Breast epithelium (tissue), 4 donors: ENCODE measurements at regions of chr7 and their contacts with region 1.

Region 1: GRCh38 chr7:4445777-4446176 is 236.3 kb upstream of the FOXK1 start:
- DNase-seq: no peak
- H3K4me3 ChIP-seq: no peak overlapping the region
- H3K27ac ChIP-seq: no peak overlapping the region
- H3K4me1 ChIP-seq: no peaks in the 10 kb centered on the region
- H3K27me3 ChIP-seq: no peaks in the 10 kb centered on the region
- CTCF ChIP-seq: no peak
- POLR2A ChIP-seq: no peak

Region 2: GRCh38 chr7:4204513-4205165 is 241.1 kb before region 1 on chr7:
- intact Hi-C with region 1: no loop called
- DNase-seq: no peak
- H3K4me3 ChIP-seq: no peak overlapping the region
- H3K27ac ChIP-seq: no peak overlapping the region
- H3K4me1 ChIP-seq: no peaks in the 10 kb centered on the region
- H3K27me3 ChIP-seq: no peaks in the 10 kb centered on the region
- CTCF ChIP-seq: no peak
- POLR2A ChIP-seq: no peak

Region 3: GRCh38 chr7:4460597-4461137 is 14.9 kb after region 1 on chr7:
- intact Hi-C with region 1: loop called (anchors 1 kb)
- DNase-seq: no peak
- H3K4me3 ChIP-seq: no peak overlapping the region
- H3K27ac ChIP-seq: no peak overlapping the region
- H3K4me1 ChIP-seq: no peaks in the 10 kb centered on the region
- H3K27me3 ChIP-seq: no peaks in the 10 kb centered on the region
- CTCF ChIP-seq: no peak
- POLR2A ChIP-seq: no peak